Activated CD4-positive, alpha-beta T cell treated with anti-CD3 and anti-CD28 coated beads, Interleukin-2, amount 10 ng/mL, durations not matched to agents 24 days and 14 days (primary cell): ENCODE measurements at regions of chr3 and their contacts with region 1.

Region 1: DNA sequence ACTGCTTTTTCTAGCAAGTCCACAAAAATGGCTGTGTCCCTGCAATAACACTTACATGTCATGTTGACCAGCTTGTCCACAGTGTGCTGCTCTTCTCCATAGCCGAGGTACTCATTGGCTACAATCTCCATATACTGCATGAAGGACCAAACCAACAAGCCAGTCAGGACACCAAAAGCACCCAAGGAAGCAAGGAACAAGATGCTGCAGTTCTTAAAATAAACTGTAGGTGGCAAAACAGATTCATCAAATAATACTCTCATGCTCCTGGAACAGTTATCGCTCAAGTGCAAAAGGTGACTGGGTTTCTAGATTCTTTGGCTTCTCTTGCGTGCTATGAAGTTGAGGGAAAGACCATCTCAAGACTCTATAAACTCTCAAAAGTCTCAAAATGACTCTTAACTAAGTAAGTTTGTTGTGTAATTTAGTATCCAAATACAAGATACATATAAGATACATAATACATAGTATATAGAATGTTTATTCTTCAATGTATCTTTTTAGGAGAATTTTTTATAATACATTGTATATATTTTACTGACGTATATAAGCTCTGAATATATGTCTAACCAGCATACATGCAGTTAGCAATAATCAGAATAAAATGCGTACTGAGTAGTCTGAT is 57.0 kb downstream of the NEK10 start:
- DNase-seq: peak; percentile 69
- H3K4me3 Mint-ChIP-seq: no peak overlapping the region
- H3K27ac Mint-ChIP-seq: no peak overlapping the region
- H3K4me1 Mint-ChIP-seq: no peaks in the 10 kb centered on the region
- H3K27me3 Mint-ChIP-seq: peaks cover 12% of the 10 kb centered on the region

Region 2: DNA sequence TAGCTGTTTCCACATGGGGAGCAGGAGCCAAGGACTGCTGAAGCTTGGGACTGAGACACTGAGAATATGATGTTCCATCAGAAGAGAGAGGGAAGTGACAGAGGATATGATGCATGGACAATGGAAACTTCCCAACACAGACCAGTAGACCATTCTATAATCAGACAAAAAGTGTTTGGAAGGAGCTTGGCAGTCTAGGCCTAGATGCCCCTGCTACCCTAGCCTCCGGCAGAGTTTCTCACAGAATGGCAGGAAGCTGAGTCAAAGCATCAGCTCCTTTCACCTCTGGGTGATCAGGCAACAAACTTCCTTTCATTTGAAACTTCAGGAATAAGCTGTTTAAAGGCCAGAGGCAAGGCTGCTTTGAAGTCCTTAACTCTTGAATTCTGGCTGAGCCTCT is 164.9 kb before region 1 on chr3:
- intact Hi-C with region 1: no loop called
- DNase-seq: no peak
- H3K4me3 Mint-ChIP-seq: no peak overlapping the region
- H3K27ac Mint-ChIP-seq: no peak overlapping the region
- H3K4me1 Mint-ChIP-seq: no peaks in the 10 kb centered on the region
- H3K27me3 Mint-ChIP-seq: peaks cover 2% of the 10 kb centered on the region

Region 3: DNA sequence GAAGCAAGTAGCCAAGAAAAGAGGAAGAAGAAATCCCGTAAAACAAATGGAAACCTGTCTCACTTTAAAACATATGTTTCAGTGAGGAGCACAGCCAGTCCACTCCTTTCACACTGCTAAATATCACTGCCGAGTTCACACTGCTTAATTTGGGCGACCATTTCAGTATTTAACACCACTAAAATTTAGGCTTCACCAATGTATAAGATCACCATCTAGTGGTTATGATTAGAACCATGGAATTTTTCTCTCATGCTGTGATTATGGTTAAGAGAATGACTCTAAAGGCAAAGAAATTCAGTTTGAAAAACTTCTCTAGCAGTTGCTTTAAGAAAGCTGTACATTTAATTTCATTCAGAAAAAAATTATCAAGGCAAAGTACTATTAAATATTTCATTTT is 155.4 kb after region 1 on chr3:
- intact Hi-C with region 1: loop called (anchors 2 kb)
- DNase-seq: peak; percentile 60
- H3K4me3 Mint-ChIP-seq: no peak overlapping the region
- H3K27ac Mint-ChIP-seq: no peak overlapping the region
- H3K4me1 Mint-ChIP-seq: peaks cover 6% of the 10 kb centered on the region
- H3K27me3 Mint-ChIP-seq: no peaks in the 10 kb centered on the region

Region 4: GRCh38 chr3:27659279-27660021 is 347.3 kb after region 1 on chr3:
- intact Hi-C with region 1: loop called (anchors 5 kb)
- DNase-seq: peak; percentile 79
- H3K4me3 Mint-ChIP-seq: no peak overlapping the region
- H3K27ac Mint-ChIP-seq: no peak overlapping the region
- H3K4me1 Mint-ChIP-seq: peaks cover 5% of the 10 kb centered on the region
- H3K27me3 Mint-ChIP-seq: no peaks in the 10 kb centered on the region

Region 5: GRCh38 chr3:27681245-27681748 is 369.1 kb after region 1 on chr3:
- intact Hi-C with region 1: loop called (anchors 1 kb)
- DNase-seq: peak; percentile 80
- H3K4me3 Mint-ChIP-seq: peak overlapping the region; percentile 68
- H3K27ac Mint-ChIP-seq: peak overlapping the region; percentile 74
- H3K4me1 Mint-ChIP-seq: peaks cover 7% of the 10 kb centered on the region
- H3K27me3 Mint-ChIP-seq: peaks cover 11% of the 10 kb centered on the region